CD8-positive, alpha-beta T cell (primary cell): ENCODE measurements at regions of chr12 and their contacts with region 1.

Region 1: GRCh38 chr12:949453-950191 is at the start of gene RAD52:
- DNase-seq: peak; percentile 93 to 99 (median 98)
- ATAC-seq: peak; percentile 91
- H3K4me3 ChIP-seq: peak within 1 kb of the TSS; percentile 92 to 98
- H3K4me3 Mint-ChIP-seq: peak within 1 kb of the TSS; percentile 94
- H3K27ac ChIP-seq: peak within 1 kb of the TSS; percentile 70 to 81
- H3K27ac Mint-ChIP-seq: peak within 1 kb of the TSS; percentile 92
- H3K4me1 ChIP-seq: peaks cover 6% of the 10 kb centered on the region
- H3K4me1 Mint-ChIP-seq: peaks cover 26% of the 10 kb centered on the region
- H3K27me3 ChIP-seq: no peaks in the 10 kb centered on the region
- H3K27me3 Mint-ChIP-seq: no peaks in the 10 kb centered on the region
- CTCF ChIP-seq: peak; percentile 94
- total RNA-seq, gene RAD52: 8.1 to 9.6 TPM

Region 2: GRCh38 chr12:389139-390096 is 560.2 kb before region 1 on chr12 and contains the start of gene KDM5A:
- CTCF ChIA-PET with region 1: no interaction called
- POLR2A ChIA-PET with region 1: no interaction called
- intact Hi-C with region 1: loop called in 1 of 2 experiments (anchors 5 kb)
- DNase-seq: peak; percentile 78 to 96 (median 90)
- ATAC-seq: peak; percentile 90
- H3K4me3 ChIP-seq: peak within 1 kb of the TSS; percentile 91 to 96
- H3K4me3 Mint-ChIP-seq: peak within 1 kb of the TSS; percentile 93
- H3K27ac ChIP-seq: peak within 1 kb of the TSS; percentile 90 to 94
- H3K27ac Mint-ChIP-seq: peak within 1 kb of the TSS; percentile 98
- H3K4me1 ChIP-seq: peaks cover 39% of the 10 kb centered on the region
- H3K4me1 Mint-ChIP-seq: peaks cover 38% of the 10 kb centered on the region
- H3K27me3 ChIP-seq: no peaks in the 10 kb centered on the region
- H3K27me3 Mint-ChIP-seq: no peaks in the 10 kb centered on the region
- CTCF ChIP-seq: no peak
- total RNA-seq, gene KDM5A: 144 to 145 TPM

Region 3: DNA sequence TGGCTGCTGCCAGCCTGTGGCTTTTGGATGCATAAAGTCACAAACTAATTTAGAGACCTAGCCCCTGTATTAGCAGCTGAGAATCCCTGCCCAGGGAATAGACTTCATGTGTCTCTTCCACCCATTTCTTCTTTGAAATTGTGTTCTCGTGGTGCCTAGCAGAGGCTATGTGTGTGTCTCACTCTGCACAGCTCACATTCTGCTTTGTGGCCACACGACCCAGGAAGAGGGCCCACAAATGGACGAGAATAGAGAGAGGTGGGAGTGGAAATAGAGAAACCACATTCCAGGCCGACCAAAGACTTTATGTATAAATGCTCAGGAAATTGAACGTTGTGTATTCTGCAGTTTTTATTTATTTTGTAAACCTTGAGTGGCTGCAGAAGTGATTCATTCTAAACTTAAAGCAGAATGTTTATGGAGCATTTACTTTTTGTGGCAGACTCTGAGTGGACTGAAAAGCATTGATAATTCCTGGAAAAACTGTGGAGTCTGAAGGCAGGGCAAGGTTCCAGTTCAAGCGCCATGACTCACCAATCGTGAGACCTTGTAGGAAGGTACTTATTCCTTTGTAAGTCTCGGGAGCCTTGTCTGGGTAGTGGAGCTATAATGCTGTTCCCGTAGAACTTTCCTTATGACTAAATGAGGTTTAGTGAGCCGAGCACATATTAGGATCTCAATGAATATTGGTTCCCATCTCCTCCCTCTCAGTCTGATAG is 480.8 kb before region 1 on chr12:
- CTCF ChIA-PET with region 1: no interaction called
- POLR2A ChIA-PET with region 1: no interaction called
- intact Hi-C with region 1: no loop called
- DNase-seq: no peak
- ATAC-seq: no peak
- H3K4me3 ChIP-seq: no peak overlapping the region
- H3K4me3 Mint-ChIP-seq: no peak overlapping the region
- H3K27ac ChIP-seq: no peak overlapping the region
- H3K27ac Mint-ChIP-seq: no peak overlapping the region
- H3K4me1 ChIP-seq: no peaks in the 10 kb centered on the region
- H3K4me1 Mint-ChIP-seq: peaks cover 2% of the 10 kb centered on the region
- H3K27me3 ChIP-seq: no peaks in the 10 kb centered on the region
- H3K27me3 Mint-ChIP-seq: peaks cover 23% of the 10 kb centered on the region
- CTCF ChIP-seq: no peak

Region 4: GRCh38 chr12:614411-614970 is 335.1 kb before region 1 on chr12:
- CTCF ChIA-PET with region 1: no interaction called
- POLR2A ChIA-PET with region 1: no interaction called
- intact Hi-C with region 1: loop called in 1 of 2 experiments (anchors 1 kb)
- DNase-seq: peak in 8 of 9 experiments; percentile 15 to 60 (median 46)
- ATAC-seq: peak; percentile 41
- H3K4me3 ChIP-seq: no peak overlapping the region
- H3K4me3 Mint-ChIP-seq: no peak overlapping the region
- H3K27ac ChIP-seq: no peak overlapping the region
- H3K27ac Mint-ChIP-seq: no peak overlapping the region
- H3K4me1 ChIP-seq: peaks cover 19% of the 10 kb centered on the region
- H3K4me1 Mint-ChIP-seq: peaks cover 32% of the 10 kb centered on the region
- H3K27me3 ChIP-seq: no peaks in the 10 kb centered on the region
- H3K27me3 Mint-ChIP-seq: no peaks in the 10 kb centered on the region
- CTCF ChIP-seq: no peak

Region 5: DNA sequence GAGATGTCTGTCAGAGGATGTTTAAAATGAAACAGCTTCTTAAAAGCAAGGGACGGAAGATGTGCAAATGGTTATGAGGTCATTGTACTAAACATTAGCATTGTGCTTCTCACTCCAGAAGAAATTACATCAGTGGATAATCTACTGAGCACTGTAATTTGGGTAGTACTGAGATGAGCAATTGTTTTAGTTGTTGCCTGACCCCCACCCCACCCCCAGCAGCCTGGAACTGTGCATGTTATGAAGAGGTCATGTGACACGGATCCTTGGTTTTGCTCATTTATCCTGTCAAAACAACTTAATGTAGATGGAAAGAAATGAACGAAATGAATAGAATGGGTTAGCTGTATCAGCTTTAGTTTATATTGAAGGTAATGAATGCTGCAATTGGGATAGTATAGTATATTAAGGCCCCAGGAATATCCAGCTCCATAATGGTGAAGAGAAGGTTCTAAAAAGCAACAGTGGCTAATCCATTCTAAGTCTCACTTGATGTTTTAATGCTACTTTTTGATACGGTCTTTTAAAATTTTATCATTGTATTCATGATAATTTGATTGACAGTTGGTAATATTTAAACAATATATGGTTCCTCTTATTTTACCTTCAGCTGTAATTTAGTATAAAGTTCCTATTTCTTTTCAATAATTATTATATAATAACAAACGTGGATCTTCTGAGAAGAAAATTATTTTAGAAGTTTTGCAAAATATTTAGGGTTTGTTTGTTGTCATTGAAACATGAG is 138.8 kb before region 1 on chr12:
- CTCF ChIA-PET with region 1: interaction called, 6 read pairs
- POLR2A ChIA-PET with region 1: interaction called, 3 read pairs
- intact Hi-C with region 1: loop called in 1 of 2 experiments (anchors 1 kb)
- DNase-seq: no peak
- ATAC-seq: peak; percentile 17
- H3K4me3 ChIP-seq: no peak overlapping the region
- H3K4me3 Mint-ChIP-seq: peak overlapping the region; percentile 33
- H3K27ac ChIP-seq: peak overlapping the region in 1 of 2 experiments; percentile 26
- H3K27ac Mint-ChIP-seq: peak overlapping the region; percentile 73
- H3K4me1 ChIP-seq: peaks cover 45% of the 10 kb centered on the region
- H3K4me1 Mint-ChIP-seq: peaks cover 68% of the 10 kb centered on the region
- H3K27me3 ChIP-seq: no peaks in the 10 kb centered on the region
- H3K27me3 Mint-ChIP-seq: no peaks in the 10 kb centered on the region
- CTCF ChIP-seq: no peak

Region 6: DNA sequence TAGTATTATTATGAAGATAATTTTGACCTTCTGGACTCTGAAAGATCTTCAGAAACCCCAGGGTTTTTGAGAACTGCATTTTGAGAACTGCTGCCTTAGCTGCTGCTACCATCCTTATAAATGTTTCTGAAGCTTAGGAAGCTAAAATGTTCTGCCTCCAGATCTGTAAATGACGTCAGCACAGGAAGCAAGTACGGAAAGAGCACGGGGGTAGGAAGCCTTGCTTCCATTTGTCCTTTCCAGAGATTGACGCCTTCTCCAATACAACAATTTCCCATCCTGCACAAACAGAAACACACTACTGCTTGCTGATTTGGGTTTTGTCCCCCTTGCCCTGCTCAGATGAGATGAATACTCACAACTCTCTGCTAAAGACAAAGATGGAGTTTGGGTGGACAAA is 18.0 kb before region 1 on chr12:
- CTCF ChIA-PET with region 1: no interaction called
- POLR2A ChIA-PET with region 1: interaction called, 3 read pairs
- intact Hi-C with region 1: loop called in 1 of 2 experiments (anchors 2 kb)
- DNase-seq: no peak
- ATAC-seq: no peak
- H3K4me3 ChIP-seq: no peak overlapping the region
- H3K4me3 Mint-ChIP-seq: no peak overlapping the region
- H3K27ac ChIP-seq: no peak overlapping the region
- H3K27ac Mint-ChIP-seq: no peak overlapping the region
- H3K4me1 ChIP-seq: no peaks in the 10 kb centered on the region
- H3K4me1 Mint-ChIP-seq: no peaks in the 10 kb centered on the region
- H3K27me3 ChIP-seq: no peaks in the 10 kb centered on the region
- H3K27me3 Mint-ChIP-seq: no peaks in the 10 kb centered on the region
- CTCF ChIP-seq: no peak

Region 7: GRCh38 chr12:1013618-1014489 is 64.2 kb after region 1 on chr12:
- CTCF ChIA-PET with region 1: no interaction called
- POLR2A ChIA-PET with region 1: no interaction called
- intact Hi-C with region 1: no loop called
- DNase-seq: no peak
- ATAC-seq: no peak
- H3K4me3 ChIP-seq: no peak overlapping the region
- H3K4me3 Mint-ChIP-seq: no peak overlapping the region
- H3K27ac ChIP-seq: no peak overlapping the region
- H3K27ac Mint-ChIP-seq: no peak overlapping the region
- H3K4me1 ChIP-seq: no peaks in the 10 kb centered on the region
- H3K4me1 Mint-ChIP-seq: peaks cover 5% of the 10 kb centered on the region
- H3K27me3 ChIP-seq: no peaks in the 10 kb centered on the region
- H3K27me3 Mint-ChIP-seq: no peaks in the 10 kb centered on the region
- CTCF ChIP-seq: no peak

Region 8: DNA sequence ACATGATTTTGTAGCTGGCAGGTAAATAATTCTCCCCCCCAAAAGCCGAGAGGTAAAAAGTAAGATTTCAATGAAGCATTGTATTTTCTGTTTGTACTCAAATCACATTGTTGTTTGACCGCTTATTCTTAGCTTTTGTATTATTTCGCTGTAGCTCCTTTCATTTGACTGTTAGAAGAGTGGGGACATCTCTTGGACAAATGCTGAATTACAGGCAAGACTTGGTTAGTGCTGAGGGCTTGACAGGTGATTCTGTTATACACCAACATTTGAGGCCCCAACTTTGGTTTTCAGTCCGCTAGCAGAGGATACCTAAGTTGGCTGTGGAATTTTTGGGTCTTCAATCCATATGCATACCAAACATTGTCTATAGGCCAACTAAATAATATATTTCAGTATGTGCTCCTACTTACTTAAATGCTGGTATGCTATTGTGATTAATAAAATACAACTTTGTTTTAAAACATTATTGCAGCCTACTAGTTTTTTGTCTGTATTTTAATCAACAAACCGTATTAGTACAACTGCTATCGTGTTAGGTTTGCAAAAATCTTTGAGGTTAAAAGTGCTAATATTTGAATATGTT is 143.6 kb after region 1 on chr12:
- CTCF ChIA-PET with region 1: interaction called, 6 read pairs
- POLR2A ChIA-PET with region 1: no interaction called
- intact Hi-C with region 1: loop called (anchors 5 kb)
- DNase-seq: peak in 4 of 9 experiments; percentile 15 to 68 (median 48)
- ATAC-seq: peak; percentile 75
- H3K4me3 ChIP-seq: no peak overlapping the region
- H3K4me3 Mint-ChIP-seq: no peak overlapping the region
- H3K27ac ChIP-seq: no peak overlapping the region
- H3K27ac Mint-ChIP-seq: no peak overlapping the region
- H3K4me1 ChIP-seq: no peaks in the 10 kb centered on the region
- H3K4me1 Mint-ChIP-seq: peaks cover 22% of the 10 kb centered on the region
- H3K27me3 ChIP-seq: no peaks in the 10 kb centered on the region
- H3K27me3 Mint-ChIP-seq: no peaks in the 10 kb centered on the region
- CTCF ChIP-seq: peak; percentile 76